GM12878 (cell line): ENCODE measurements at regions of chr19 and their contacts with region 1.

Region 1: GRCh38 chr19:13277104-13277809 is 127.0 kb downstream of the IER2 start:
- DNase-seq: peak; percentile 71
- ATAC-seq: peak; percentile 96
- H3K4me3 ChIP-seq: no peak overlapping the region
- H3K27ac ChIP-seq: 0 out of 2 replicates have a peak overlapping the region, but pooled peaks have one; percentile 24
- H3K4me1 ChIP-seq: peaks cover 11% of the 10 kb centered on the region
- H3K27me3 ChIP-seq: no peaks in the 10 kb centered on the region
- CTCF ChIP-seq: peak; percentile 43 to 79 (median 67); a peak in 5 of 6 replicates
- EP300 ChIP-seq: no peak
- POLR2A ChIP-seq: no peak
- RAD21 ChIP-seq: peak; percentile 82

Region 2: GRCh38 chr19:13195678-13196077 is 81.6 kb before region 1 on chr19:
- CTCF ChIA-PET with region 1: interaction called, 17 read pairs
- POLR2A ChIA-PET with region 1: no interaction called
- RAD21 ChIA-PET with region 1: interaction called, 3 read pairs
- SMC1A ChIA-PET with region 1: interaction called, 3 read pairs
- in situ Hi-C with region 1: no loop called
- intact Hi-C with region 1: no loop called
- DNase-seq: no peak
- ATAC-seq: peak; percentile 88
- H3K4me3 ChIP-seq: no peak overlapping the region
- H3K27ac ChIP-seq: no peak overlapping the region
- H3K4me1 ChIP-seq: peaks cover 6% of the 10 kb centered on the region; the same call in 1 of the 2 replicates
- H3K27me3 ChIP-seq: no peaks in the 10 kb centered on the region
- CTCF ChIP-seq: peak; percentile 62 to 75 (median 75); a peak in 5 of 6 replicates
- EP300 ChIP-seq: no peak
- POLR2A ChIP-seq: no peak
- RAD21 ChIP-seq: peak; percentile 81

Region 3: DNA sequence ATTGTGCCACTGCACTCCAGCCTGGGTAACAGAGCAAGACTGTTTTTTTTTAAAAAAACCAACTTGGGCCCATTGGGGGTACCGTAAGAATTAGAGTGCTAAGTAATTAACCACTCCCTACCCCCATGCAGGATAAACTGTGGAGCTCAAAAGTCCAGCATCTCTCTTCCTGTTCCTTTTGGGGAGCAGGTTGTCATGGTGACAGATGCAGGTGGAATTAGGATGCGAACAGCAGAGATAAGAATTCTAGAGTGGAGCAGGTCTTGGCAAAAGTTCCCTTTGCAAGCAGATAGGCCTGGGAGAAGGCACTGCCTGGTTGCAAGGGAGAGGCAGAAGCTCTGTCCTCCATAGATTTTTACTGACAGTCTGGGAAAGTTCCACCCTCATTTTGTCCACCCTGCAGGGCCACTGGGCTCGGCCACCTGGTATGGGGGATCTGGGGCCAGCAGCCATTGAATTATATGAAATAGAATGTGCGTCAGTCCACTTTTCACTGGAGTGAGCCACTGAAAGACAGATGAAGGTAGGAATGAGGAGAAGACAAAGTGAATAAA is 14.6 kb after region 1 on chr19:
- CTCF ChIA-PET with region 1: interaction called, 15 read pairs
- POLR2A ChIA-PET with region 1: no interaction called
- RAD21 ChIA-PET with region 1: no interaction called
- SMC1A ChIA-PET with region 1: interaction called, 3 read pairs
- in situ Hi-C with region 1: no loop called
- intact Hi-C with region 1: no loop called
- DNase-seq: no peak
- ATAC-seq: no peak
- H3K4me3 ChIP-seq: no peak overlapping the region
- H3K27ac ChIP-seq: no peak overlapping the region
- H3K4me1 ChIP-seq: no peaks in the 10 kb centered on the region
- H3K27me3 ChIP-seq: no peaks in the 10 kb centered on the region
- CTCF ChIP-seq: no peak
- EP300 ChIP-seq: no peak
- POLR2A ChIP-seq: no peak
- RAD21 ChIP-seq: no peak

Region 4: DNA sequence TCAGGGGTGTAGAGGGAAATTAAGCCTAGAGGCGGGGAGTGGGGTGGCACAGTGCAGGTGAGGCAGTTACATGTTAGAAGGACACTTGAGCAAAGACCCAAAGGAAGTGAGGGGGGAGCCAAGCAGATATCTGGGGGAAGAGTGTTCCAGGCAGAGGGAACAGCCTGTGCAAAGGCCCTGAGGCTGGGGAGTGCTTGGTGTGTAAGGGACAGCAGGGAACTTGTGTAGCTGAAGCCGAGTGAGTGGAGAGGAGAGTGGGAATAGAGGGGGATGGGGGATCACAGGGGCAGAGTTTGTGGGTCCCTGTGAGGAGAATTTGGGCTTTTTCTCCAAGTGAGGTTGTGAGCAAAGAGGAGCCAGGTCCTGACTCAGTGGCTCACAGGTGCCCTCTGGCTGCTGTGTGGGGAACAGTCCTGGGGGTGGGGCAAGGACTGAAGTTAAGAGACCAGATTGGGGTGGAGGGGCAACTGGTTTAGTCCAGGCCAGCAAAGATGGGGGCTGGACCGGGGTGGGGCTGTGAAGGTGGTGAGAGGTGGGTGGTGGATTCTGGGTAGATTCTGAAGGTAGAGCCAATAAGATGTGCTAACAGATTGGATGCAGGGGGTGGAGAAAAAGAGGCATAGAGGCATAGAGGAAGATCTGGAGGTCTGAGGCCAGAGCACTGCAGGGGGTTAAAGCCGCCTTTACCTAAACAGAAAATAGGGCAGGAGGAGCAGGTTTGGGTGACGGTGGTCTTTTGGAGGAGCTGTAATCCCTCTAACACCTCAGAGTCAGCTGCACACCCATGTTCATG is 153.7 kb after region 1 on chr19:
- CTCF ChIA-PET with region 1: interaction called, 12 read pairs
- POLR2A ChIA-PET with region 1: no interaction called
- RAD21 ChIA-PET with region 1: interaction called, 7 read pairs
- SMC1A ChIA-PET with region 1: interaction called, 5 read pairs
- in situ Hi-C with region 1: loop called (anchors 5 kb)
- intact Hi-C with region 1: loop called (anchors 1 kb)
- DNase-seq: no peak
- ATAC-seq: peak; percentile 82
- H3K4me3 ChIP-seq: no peak overlapping the region
- H3K27ac ChIP-seq: no peak overlapping the region
- H3K4me1 ChIP-seq: no peaks in the 10 kb centered on the region
- H3K27me3 ChIP-seq: no peaks in the 10 kb centered on the region
- CTCF ChIP-seq: peak; percentile 71 to 87 (median 79)
- EP300 ChIP-seq: no peak
- POLR2A ChIP-seq: no peak
- RAD21 ChIP-seq: peak; percentile 78

Region 5: DNA sequence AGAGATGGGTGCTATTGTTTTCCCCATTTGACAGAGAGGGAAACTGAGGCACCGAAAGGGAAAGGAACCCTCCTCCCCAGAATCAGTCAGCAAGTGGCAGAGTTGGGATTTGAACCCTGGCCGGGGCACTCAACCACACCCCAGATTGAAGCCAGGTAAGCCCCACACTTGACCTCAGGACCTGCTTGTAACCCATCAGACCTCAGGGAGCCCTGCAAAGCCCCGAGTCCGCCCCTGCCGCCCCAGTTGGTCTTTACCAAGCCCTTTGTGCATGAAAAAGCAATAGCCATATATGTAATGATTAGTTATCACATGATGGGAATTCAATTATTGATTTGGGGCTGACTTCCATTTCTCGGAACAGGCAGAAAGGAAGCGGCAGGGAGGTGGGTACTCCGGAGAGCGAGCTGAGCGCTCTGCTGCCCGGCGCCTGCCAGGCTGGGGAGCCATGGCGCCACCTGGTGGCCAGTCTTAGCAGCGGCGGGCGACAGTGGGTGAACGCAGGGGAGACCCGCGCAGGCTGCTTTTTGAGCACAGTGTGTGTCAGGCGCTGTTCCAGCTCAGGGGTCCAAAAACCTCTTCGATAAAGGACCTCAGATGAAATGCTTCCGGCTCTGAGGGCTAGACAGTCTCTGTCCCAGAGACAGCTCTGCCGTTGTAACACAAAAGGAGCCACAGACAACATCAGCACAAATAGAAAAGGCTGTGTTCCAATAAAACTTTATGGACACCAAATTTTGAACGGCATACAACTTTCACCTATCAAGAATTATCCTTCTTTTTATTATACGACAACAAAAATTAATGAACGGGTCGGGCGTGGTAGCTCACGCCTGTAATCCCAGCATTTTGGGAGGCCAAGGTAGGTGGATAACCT is 311.9 kb after region 1 on chr19:
- CTCF ChIA-PET with region 1: interaction called, 49 read pairs
- POLR2A ChIA-PET with region 1: interaction called, 3 read pairs
- RAD21 ChIA-PET with region 1: interaction called, 22 read pairs
- SMC1A ChIA-PET with region 1: interaction called, 5 read pairs
- in situ Hi-C with region 1: loop called (anchors 5 kb)
- intact Hi-C with region 1: loop called (anchors 1 kb)
- DNase-seq: no peak
- ATAC-seq: peak; percentile 96
- H3K4me3 ChIP-seq: no peak overlapping the region
- H3K27ac ChIP-seq: no peak overlapping the region
- H3K4me1 ChIP-seq: no peaks in the 10 kb centered on the region
- H3K27me3 ChIP-seq: no peaks in the 10 kb centered on the region
- CTCF ChIP-seq: peak; percentile 85 to 97 (median 90)
- EP300 ChIP-seq: no peak
- POLR2A ChIP-seq: no peak
- RAD21 ChIP-seq: peak; percentile 70

Region 6: DNA sequence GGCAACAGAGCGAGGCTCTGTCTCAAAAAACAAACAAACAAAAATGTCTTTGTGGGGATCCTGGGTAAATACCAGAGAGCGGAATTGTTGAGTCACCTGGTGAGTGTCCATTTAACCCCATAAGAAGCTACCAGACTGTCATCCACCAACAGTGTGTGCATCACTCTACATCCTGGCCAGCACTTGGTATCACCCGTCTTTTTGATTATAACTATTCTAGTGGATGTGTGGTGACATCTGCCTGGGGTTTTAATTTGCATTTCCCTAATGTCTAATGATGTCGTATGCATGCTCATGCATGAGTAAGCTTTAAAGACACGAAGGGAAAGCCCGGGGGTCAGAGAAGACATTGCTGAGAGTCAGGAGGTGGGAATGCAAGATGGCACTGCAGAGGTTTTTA is 360.4 kb after region 1 on chr19:
- CTCF ChIA-PET with region 1: no interaction called
- POLR2A ChIA-PET with region 1: no interaction called
- RAD21 ChIA-PET with region 1: no interaction called
- SMC1A ChIA-PET with region 1: no interaction called
- in situ Hi-C with region 1: no loop called
- intact Hi-C with region 1: no loop called
- DNase-seq: no peak
- ATAC-seq: no peak
- H3K4me3 ChIP-seq: no peak overlapping the region
- H3K27ac ChIP-seq: no peak overlapping the region
- H3K4me1 ChIP-seq: no peaks in the 10 kb centered on the region
- H3K27me3 ChIP-seq: no peaks in the 10 kb centered on the region; a peak in 1 of 4 replicates
- CTCF ChIP-seq: no peak
- EP300 ChIP-seq: no peak
- POLR2A ChIP-seq: no peak
- RAD21 ChIP-seq: no peak

Region 7: DNA sequence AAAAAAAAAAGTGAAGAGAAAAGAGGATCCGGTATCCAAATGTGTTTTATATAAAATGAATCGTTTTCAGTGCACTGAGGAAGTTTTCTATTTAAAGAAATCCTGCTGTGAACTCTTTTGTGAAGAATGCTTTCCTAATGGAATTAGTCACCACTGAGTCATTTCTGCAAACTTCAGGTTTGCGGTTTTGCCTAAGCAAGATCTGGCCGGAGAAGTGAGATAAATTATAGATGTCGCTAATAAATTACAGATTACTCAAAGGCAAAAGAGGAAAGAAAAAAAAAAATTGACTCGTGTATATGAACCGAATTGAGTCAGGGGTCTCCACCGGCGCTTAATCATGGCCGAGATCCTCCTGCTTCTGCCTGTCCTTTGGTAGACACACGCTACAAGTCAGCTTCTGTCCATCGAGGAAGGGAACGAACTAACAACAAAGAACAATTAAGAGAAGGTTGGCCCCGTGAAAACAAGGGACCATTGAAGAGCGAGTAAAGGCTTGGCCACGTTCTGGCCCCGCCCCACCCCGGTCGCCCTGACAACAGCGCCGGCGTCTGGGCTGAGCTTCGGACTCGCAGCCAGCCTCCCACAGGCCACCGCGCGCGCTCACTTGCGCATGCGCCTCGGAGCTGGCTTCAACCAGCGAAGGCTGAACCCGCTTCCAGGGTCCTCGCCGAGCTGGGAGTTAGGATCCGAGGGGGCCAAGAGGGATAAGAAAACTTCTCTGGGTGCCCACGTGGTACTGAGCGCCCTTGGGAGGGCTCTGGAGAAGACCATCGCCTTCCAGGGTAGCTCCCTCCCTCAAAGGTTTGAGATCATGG is 454.1 kb after region 1 on chr19:
- CTCF ChIA-PET with region 1: interaction called, 3 read pairs
- POLR2A ChIA-PET with region 1: no interaction called
- RAD21 ChIA-PET with region 1: no interaction called
- SMC1A ChIA-PET with region 1: no interaction called
- in situ Hi-C with region 1: no loop called
- intact Hi-C with region 1: loop called (anchors 10 kb)
- DNase-seq: peak; percentile 72
- ATAC-seq: peak; percentile 100
- H3K4me3 ChIP-seq: peak overlapping the region; percentile 77
- H3K27ac ChIP-seq: peak overlapping the region; percentile 81
- H3K4me1 ChIP-seq: peaks cover 15% of the 10 kb centered on the region
- H3K27me3 ChIP-seq: no peaks in the 10 kb centered on the region
- CTCF ChIP-seq: no peak
- EP300 ChIP-seq: peak; percentile 62 to 84; a peak in 3 of 4 replicates
- POLR2A ChIP-seq: peak; percentile 80
- RAD21 ChIP-seq: no peak